ENCODE measurements at regions of chr1 and their contacts with region 1.

Region 1: GRCh38 chr1:108746372-108747205 is at the start of gene STXBP3:
- DNase-seq: peak; percentile 99 to 100 (median 100)
- ATAC-seq: peak; percentile 95
- H3K4me3 ChIP-seq: peak within 1 kb of the TSS; percentile 92
- H3K4me3 Mint-ChIP-seq: peak within 1 kb of the TSS; percentile 97
- H3K27ac ChIP-seq: peak within 1 kb of the TSS; percentile 90 to 95
- H3K27ac Mint-ChIP-seq: peak within 1 kb of the TSS; percentile 91
- H3K4me1 ChIP-seq: peaks cover 14% of the 10 kb centered on the region
- H3K4me1 Mint-ChIP-seq: peaks cover 44% of the 10 kb centered on the region
- H3K27me3 ChIP-seq: no peaks in the 10 kb centered on the region
- H3K27me3 Mint-ChIP-seq: no peaks in the 10 kb centered on the region
- CTCF ChIP-seq: peak; percentile 92
- total RNA-seq, gene STXBP3: 41.6 to 50.5 TPM

Region 2: GRCh38 chr1:107529502-107530149 is 1217.0 kb before region 1 on chr1:
- CTCF ChIA-PET with region 1: no interaction called
- POLR2A ChIA-PET with region 1: no interaction called
- intact Hi-C with region 1: no loop called
- DNase-seq: peak in 2 of 14 experiments; percentile 17 to 20
- ATAC-seq: no peak
- H3K4me3 ChIP-seq: no peak overlapping the region
- H3K4me3 Mint-ChIP-seq: no peak overlapping the region
- H3K27ac ChIP-seq: no peak overlapping the region
- H3K27ac Mint-ChIP-seq: no peak overlapping the region
- H3K4me1 ChIP-seq: no peaks in the 10 kb centered on the region
- H3K4me1 Mint-ChIP-seq: no peaks in the 10 kb centered on the region
- H3K27me3 ChIP-seq: peaks cover 0 to 3% of the 10 kb centered on the region in 2 experiments
- H3K27me3 Mint-ChIP-seq: peaks cover 11% of the 10 kb centered on the region
- CTCF ChIP-seq: peak; percentile 39

Region 3: GRCh38 chr1:108512239-108512981 is 234.2 kb before region 1 on chr1:
- CTCF ChIA-PET with region 1: no interaction called
- POLR2A ChIA-PET with region 1: no interaction called
- intact Hi-C with region 1: loop called in 1 of 2 experiments (anchors 1 kb)
- DNase-seq: peak in 4 of 14 experiments; percentile 6 to 75 (median 69)
- ATAC-seq: peak; percentile 77
- H3K4me3 ChIP-seq: no peak overlapping the region
- H3K4me3 Mint-ChIP-seq: no peak overlapping the region
- H3K27ac ChIP-seq: no peak overlapping the region
- H3K27ac Mint-ChIP-seq: no peak overlapping the region
- H3K4me1 ChIP-seq: no peaks in the 10 kb centered on the region
- H3K4me1 Mint-ChIP-seq: no peaks in the 10 kb centered on the region
- H3K27me3 ChIP-seq: peaks cover 0 to 10% of the 10 kb centered on the region in 2 experiments
- H3K27me3 Mint-ChIP-seq: peaks cover 13% of the 10 kb centered on the region
- CTCF ChIP-seq: peak; percentile 99

Region 4: DNA sequence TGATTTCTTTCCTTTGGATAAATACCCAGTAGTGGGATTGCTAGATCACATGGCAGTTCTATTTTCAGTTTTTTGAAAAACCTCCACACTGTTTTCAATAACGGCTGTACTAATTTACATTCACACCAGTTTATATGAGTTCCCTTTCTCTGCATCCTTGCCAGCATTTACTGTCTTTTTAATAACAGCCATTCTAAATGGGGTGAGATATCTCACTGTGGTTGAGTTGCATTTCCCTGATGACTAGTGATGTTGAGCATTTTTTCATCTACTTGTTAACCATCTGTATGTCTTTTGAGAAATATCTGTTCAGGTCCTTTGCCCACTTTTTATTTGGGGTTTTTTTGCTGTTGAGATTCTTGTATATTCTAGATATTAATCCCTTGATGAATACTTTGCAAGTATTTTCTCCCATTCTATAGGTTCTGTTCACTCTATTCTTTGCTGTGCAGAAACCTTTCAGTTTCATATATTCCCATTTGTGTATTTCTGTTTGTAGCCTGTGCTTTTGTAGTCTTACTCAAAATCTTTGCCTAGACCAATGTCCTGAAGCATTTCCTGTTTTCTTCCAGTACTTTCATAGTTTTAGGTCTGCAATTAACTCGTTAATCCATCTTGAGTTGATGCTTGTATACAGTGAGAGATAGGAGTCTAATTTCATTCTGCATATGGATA is 93.0 kb before region 1 on chr1:
- CTCF ChIA-PET with region 1: no interaction called
- POLR2A ChIA-PET with region 1: no interaction called
- intact Hi-C with region 1: loop called (anchors 5 kb)
- DNase-seq: peak in 1 of 14 experiments; percentile 63
- ATAC-seq: no peak
- H3K4me3 ChIP-seq: no peak overlapping the region
- H3K4me3 Mint-ChIP-seq: no peak overlapping the region
- H3K27ac ChIP-seq: no peak overlapping the region
- H3K27ac Mint-ChIP-seq: peak overlapping the region; percentile 0
- H3K4me1 ChIP-seq: no peaks in the 10 kb centered on the region
- H3K4me1 Mint-ChIP-seq: peaks cover 4% of the 10 kb centered on the region
- H3K27me3 ChIP-seq: no peaks in the 10 kb centered on the region
- H3K27me3 Mint-ChIP-seq: no peaks in the 10 kb centered on the region
- CTCF ChIP-seq: no peak

Region 5: DNA sequence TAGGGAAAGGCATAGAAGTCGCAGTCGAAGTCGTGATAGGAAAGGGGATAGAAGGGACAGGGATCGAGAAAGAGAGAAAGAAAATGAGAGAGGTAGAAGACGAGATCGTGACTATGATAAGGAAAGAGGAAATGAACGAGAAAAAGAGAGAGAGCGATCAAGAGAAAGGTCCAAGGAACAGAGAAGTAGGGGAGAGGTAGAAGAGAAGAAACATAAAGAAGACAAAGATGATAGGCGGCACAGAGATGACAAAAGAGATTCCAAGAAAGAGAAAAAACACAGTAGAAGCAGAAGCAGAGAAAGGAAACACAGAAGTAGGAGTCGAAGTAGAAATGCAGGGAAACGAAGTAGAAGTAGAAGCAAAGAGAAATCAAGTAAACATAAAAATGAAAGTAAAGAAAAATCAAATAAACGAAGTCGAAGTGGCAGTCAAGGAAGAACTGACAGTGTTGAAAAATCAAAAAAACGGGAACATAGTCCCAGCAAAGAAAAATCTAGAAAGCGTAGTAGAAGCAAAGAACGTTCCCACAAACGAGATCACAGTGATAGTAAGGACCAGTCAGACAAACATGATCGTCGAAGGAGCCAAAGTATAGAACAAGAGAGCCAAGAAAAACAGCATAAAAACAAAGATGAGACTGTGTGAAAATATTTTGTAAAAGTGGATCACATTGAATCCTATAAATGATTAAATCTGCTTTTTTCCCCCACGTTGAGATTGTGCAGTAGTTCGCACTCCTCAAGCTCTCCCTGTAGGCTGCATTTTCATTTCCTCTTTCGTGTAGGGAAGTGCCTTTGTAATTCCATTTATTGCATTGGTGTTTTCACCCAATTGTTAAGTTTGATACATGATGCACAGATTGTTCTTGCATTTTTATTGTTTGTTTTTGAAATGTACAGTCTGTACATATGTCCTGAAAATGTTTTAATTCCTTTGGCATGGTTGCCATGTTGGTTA is 46.9 kb before region 1 on chr1:
- CTCF ChIA-PET with region 1: no interaction called
- POLR2A ChIA-PET with region 1: interaction called, 3 read pairs
- intact Hi-C with region 1: loop called (anchors 2 kb)
- DNase-seq: no peak
- ATAC-seq: no peak
- H3K4me3 ChIP-seq: peak overlapping the region; percentile 24
- H3K4me3 Mint-ChIP-seq: peak overlapping the region; percentile 82
- H3K27ac ChIP-seq: peak overlapping the region; percentile 37 to 44
- H3K27ac Mint-ChIP-seq: peak overlapping the region; percentile 97
- H3K4me1 ChIP-seq: peaks cover 38% of the 10 kb centered on the region
- H3K4me1 Mint-ChIP-seq: peaks cover 76% of the 10 kb centered on the region
- H3K27me3 ChIP-seq: no peaks in the 10 kb centered on the region
- H3K27me3 Mint-ChIP-seq: no peaks in the 10 kb centered on the region
- CTCF ChIP-seq: no peak

Region 6: DNA sequence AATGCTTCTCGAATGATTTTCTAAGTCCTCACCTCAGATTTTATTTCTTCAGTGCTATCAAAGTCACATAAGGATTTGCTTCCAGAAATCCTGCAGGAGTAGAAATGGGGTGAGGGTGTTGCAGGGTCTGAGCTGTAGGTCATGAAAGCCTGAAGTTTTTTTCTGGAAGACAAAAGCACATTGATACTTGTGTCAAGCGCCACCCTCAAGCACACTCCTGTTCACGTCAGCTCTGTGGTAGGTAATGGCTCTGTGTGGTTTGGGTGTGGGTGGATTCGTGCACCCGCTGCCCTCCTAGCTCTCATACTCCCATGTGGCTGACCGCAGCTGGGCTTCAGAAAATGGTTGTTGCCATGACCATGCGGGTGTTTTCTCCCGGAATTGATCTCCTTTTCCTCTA is 70.4 kb after region 1 on chr1:
- CTCF ChIA-PET with region 1: no interaction called
- POLR2A ChIA-PET with region 1: no interaction called
- intact Hi-C with region 1: no loop called
- DNase-seq: no peak
- ATAC-seq: no peak
- H3K4me3 ChIP-seq: no peak overlapping the region
- H3K4me3 Mint-ChIP-seq: no peak overlapping the region
- H3K27ac ChIP-seq: no peak overlapping the region
- H3K27ac Mint-ChIP-seq: no peak overlapping the region
- H3K4me1 ChIP-seq: no peaks in the 10 kb centered on the region
- H3K4me1 Mint-ChIP-seq: no peaks in the 10 kb centered on the region
- H3K27me3 ChIP-seq: no peaks in the 10 kb centered on the region
- H3K27me3 Mint-ChIP-seq: no peaks in the 10 kb centered on the region
- CTCF ChIP-seq: no peak

Region 7: DNA sequence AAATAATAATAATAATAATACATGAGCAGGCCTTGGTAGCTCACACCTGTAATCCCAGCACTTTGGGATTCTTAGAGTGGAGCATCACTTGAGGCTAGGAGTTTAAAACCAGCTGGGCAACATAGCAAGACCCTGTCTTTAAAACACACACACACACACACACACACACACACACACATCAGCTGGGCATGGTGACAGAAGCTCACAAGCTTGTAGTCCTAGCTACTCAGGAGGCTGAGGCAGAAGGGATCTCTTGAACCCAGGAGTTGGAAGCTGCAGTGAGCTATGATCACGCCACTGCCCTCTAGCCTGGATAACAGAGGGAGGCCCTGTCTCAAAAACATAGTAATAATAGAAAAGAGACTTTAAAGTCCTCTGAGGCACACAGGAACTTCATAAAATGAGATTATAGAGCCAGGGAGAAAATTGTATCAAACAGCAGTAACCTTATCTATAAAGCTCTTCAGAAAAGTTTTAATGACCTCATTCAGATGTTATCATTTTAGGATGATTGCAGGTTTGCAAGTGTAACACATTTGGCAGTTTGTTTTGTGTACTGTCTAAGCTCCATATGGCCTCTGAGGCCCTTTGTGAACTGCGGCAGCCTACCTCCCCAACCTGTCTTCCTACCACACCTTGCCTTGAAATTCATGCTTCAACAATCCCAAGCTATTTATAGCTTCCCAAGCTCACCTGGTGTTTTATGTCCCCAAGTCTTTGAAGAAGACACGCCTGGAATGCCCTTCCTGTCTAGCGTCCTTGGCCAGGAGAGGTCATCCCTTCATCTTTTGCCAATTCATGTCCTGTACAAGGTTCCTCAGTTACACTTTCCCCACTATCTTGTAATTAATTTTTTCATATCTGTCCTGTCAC is 118.7 kb after region 1 on chr1:
- CTCF ChIA-PET with region 1: no interaction called
- POLR2A ChIA-PET with region 1: no interaction called
- intact Hi-C with region 1: no loop called
- DNase-seq: no peak
- ATAC-seq: no peak
- H3K4me3 ChIP-seq: no peak overlapping the region
- H3K4me3 Mint-ChIP-seq: no peak overlapping the region
- H3K27ac ChIP-seq: no peak overlapping the region
- H3K27ac Mint-ChIP-seq: no peak overlapping the region
- H3K4me1 ChIP-seq: no peaks in the 10 kb centered on the region
- H3K4me1 Mint-ChIP-seq: no peaks in the 10 kb centered on the region
- H3K27me3 ChIP-seq: peaks cover 5% of the 10 kb centered on the region in 2 experiments
- H3K27me3 Mint-ChIP-seq: peaks cover 14% of the 10 kb centered on the region
- CTCF ChIP-seq: no peak

Region 8: GRCh38 chr1:108963052-108963686 is 216.6 kb after region 1 on chr1 and contains the start of gene CLCC1:
- CTCF ChIA-PET with region 1: no interaction called
- POLR2A ChIA-PET with region 1: no interaction called
- intact Hi-C with region 1: loop called in 1 of 2 experiments (anchors 5 kb)
- DNase-seq: peak; percentile 80 to 97 (median 88)
- ATAC-seq: peak; percentile 93
- H3K4me3 ChIP-seq: peak within 1 kb of the TSS; percentile 59
- H3K4me3 Mint-ChIP-seq: peak within 1 kb of the TSS; percentile 94
- H3K27ac ChIP-seq: peak within 1 kb of the TSS; percentile 64 to 79
- H3K27ac Mint-ChIP-seq: peak within 1 kb of the TSS; percentile 93
- H3K4me1 ChIP-seq: peaks cover 31% of the 10 kb centered on the region
- H3K4me1 Mint-ChIP-seq: peaks cover 47% of the 10 kb centered on the region
- H3K27me3 ChIP-seq: no peaks in the 10 kb centered on the region
- H3K27me3 Mint-ChIP-seq: no peaks in the 10 kb centered on the region
- CTCF ChIP-seq: no peak
- total RNA-seq, gene CLCC1: 8.6 to 9.1 TPM